Heart right ventricle (tissue), 16 donors: ENCODE measurements at regions of chr16 and their contacts with region 1.

Region 1: DNA sequence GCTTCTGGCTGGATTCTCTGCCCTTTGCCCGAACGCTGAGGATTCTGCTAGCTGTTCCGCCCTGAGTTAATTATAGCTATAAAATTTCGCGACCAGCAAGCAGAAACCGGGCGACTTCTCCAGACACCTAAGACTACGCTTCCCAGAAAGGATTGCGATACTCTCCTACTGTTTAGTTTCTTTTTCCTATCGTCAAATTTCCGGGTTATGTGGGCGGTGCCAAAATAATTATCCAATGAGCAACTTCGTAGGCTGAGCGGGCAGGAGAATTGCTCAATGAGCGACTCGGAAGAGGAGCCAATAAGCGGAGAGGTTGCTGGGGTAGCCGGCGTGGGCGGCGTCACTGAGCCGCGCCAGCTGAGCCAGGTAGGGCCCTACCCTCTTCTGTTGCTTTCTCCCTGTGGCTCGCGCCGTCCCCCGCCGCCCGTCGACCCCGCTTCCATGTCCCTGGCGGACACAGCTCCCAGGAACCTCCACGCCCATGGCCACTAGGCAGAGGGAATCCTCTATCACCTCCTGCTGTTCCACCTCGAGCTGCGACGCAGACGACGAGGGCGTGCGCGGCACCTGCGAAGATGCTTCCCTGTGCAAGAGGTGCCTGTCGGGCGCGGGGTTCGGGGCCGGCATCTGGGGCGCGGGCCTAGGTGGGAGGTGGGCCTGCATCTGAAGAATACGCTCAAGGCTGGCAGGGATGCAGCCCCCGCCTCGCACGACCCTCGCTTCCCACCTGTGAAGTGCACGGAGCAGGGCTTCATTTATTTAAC is at the start of gene LCMT1:
- DNase-seq: peak; percentile 85 to 96
- ATAC-seq: peak; percentile 86 to 93 (median 90)
- H3K4me3 ChIP-seq: peak within 1 kb of the TSS; percentile 64 to 100 (median 94)
- H3K27ac ChIP-seq: peak within 1 kb of the TSS; percentile 44 to 94 (median 85)
- H3K4me1 ChIP-seq: peaks cover 4 to 56% (median 41%) of the 10 kb centered on the region in 9 donors
- H3K27me3 ChIP-seq: no peaks in the 10 kb centered on the region
- CTCF ChIP-seq: peak in 1 of 9 donors; percentile 27
- total RNA-seq, gene LCMT1: 38.4 to 49.1 (median 44.2) TPM

Region 2: DNA sequence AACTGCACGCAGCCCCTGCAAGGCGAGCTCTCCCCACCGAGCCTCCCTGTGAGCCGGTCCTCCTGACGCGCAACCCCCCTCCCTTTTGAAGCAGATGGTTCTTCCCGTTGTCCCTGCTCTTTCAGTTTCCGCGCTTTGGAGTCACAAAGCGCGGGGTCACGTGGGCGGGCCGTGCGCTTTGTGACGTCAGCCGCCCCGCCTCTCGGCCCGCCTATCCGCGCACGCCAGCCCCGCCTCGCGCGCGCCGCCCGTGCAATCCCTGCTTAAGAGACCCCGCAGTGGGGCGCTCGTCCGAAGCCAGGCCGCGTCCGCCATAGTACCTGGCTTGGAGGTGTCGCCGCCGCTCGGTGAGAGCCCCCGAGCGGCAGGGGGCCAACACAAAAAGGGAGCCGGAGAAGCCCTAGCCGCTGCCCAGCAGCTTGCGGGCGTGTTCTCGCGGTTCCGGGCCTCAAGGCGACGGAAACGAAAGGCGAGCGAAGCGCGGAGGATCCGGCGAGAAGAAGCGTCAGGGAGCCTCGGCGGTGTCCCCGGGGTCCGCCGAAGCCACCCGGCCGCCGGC is 572.2 kb before region 1 on chr16 and contains the start of gene RBBP6:
- intact Hi-C with region 1: loop called in 1 of 10 experiments (anchors 5 kb)
- DNase-seq: peak; percentile 93 to 95
- ATAC-seq: peak; percentile 95 to 98 (median 97)
- H3K4me3 ChIP-seq: peak within 1 kb of the TSS; percentile 61 to 97 (median 82)
- H3K27ac ChIP-seq: peak within 1 kb of the TSS; percentile 95 to 100 (median 100)
- H3K4me1 ChIP-seq: peaks cover 3 to 35% (median 29%) of the 10 kb centered on the region in 9 donors
- H3K27me3 ChIP-seq: no peaks in the 10 kb centered on the region
- CTCF ChIP-seq: peak; percentile 7 to 57 (median 39)
- total RNA-seq, gene RBBP6: 26.8 to 50.3 (median 33.1) TPM

Region 3: DNA sequence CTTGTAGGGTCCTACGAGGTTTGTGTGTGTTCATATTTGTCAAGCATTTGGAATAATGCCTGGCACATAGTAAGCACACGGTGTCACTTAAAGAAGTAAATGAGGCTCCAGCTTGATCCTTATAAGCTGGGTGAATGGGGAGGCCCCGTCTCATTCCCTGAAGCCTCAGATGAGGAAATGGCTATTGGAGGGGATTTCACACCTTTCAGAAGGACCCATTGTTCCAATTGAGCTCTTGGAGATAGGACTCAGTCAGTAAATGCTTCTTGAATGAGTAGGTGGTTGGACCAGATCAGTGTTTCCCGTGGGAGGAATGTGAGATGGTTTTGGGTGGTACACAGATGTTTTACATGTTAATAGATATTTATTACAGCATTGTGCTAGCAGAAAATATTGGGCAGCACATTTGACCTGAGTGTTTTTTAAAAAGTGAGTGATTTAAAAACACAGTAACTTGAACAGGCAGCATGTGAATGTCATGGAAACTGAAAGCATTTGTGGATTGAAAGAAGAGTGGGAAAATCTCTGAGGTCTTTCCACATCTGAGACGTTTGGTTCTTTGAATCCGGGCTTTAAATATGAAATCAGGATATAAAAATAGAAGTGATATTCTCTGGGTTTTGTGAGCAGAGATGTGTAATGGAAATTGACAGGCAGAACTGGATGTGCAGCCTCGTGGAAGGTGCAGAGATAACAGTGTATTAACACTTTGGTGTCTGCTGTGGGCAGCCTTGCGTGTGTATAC is 60.0 kb before region 1 on chr16:
- intact Hi-C with region 1: loop called in 4 of 10 experiments (anchors 2 to 5 kb)
- DNase-seq: no peak
- ATAC-seq: peak in 6 of 8 donors; percentile 35 to 71 (median 60)
- H3K4me3 ChIP-seq: peak overlapping the region in 5 of 10 donors; percentile 5 to 24 (median 20)
- H3K27ac ChIP-seq: peak overlapping the region; percentile 36 to 97 (median 78)
- H3K4me1 ChIP-seq: peaks cover 0 to 54% (median 29%) of the 10 kb centered on the region in 9 donors
- H3K27me3 ChIP-seq: no peaks in the 10 kb centered on the region
- CTCF ChIP-seq: no peak

Region 4: DNA sequence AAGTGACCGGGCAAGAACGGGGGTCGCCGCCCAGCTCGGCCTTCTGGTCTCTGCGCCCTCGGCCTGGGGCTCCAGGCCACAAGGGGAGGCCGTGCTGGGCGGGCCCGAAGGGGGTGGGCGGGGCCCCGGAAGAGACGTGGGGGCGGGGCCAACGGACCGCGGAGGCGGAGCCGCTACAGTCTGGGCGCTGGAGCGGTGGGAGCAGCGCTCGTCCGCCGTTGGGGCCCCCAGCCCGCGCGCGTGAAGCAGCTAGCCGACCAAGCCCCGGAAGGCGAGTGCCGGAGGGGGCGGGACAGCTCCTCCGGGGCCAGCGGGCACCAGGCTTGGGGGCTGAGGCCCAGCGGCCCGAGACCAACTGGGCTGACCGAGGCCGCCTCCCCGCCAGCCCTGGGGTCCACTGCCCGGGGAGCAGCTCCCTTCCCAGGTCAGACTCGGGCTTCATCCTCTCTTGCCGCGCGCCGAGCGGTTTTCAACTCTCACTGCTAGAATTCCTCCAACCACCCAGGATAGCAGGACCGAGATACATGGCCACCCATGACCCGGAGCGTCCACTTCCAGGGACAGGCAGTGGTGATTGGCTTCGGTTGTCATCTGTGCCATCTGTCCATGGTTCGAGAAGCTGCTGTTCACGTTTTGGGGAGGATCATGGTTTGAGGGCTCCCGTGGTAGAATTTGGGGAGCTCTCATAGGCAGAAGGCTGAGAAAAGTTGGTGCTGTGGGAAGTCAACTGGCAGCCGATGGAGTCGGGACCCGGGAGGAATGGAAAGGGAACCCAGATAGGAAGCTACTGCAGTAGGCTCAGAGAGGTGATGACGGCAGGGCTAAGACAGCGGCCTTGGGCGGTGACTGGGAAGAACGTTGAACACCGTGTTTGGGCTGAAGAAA is 44.6 kb before region 1 on chr16:
- intact Hi-C with region 1: loop called in 6 of 10 experiments (anchors 2 to 5 kb)
- DNase-seq: peak; percentile 87 to 88
- ATAC-seq: peak; percentile 93 to 99 (median 97)
- H3K4me3 ChIP-seq: peak overlapping the region; percentile 69 to 94 (median 82)
- H3K27ac ChIP-seq: peak overlapping the region; percentile 74 to 97 (median 94)
- H3K4me1 ChIP-seq: peaks cover 0 to 36% (median 27%) of the 10 kb centered on the region in 9 donors
- H3K27me3 ChIP-seq: no peaks in the 10 kb centered on the region
- CTCF ChIP-seq: no peak

Region 5: DNA sequence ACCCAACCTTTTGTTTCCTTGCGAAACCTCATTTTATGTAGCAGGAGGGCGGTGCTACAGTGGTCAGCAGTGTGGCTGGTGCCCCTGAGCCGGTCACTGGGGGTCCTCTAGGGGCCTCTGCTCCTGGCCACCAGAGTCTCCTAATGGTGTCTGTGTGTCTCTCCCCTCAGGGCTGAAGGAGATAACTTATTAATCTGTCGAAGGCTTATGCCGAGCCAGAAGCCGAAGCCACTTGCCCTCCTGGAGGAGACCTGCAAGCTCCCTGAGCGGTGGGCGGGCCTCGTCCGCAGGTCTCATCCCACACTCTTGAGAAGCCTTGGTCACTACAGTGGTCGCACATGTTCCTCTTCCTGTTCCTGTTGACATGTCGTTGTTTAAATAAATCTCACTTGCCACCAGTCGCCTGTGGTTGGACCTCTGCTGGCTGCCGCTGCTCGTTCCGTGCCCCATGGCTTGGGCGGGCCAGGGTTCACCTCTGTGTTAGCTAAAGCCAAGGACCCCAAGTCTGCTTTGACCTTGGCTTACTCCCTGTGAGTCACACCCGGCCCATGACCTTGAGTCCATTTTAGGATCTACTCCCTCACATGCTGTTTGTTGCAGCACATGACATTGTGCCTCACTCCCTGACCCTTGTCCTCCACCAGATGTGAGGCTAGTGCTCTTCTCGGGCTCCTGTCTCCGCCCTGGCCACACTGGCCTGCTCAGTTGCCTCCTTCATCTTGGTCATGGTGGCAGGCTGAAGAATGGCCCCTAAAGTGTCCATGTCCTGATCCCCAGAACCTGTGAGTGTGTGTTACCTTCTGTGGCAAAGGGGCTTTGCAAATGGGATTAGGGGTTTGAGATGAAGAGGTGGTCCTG is 66.5 kb after region 1 on chr16:
- intact Hi-C with region 1: loop called in 1 of 10 experiments (anchors 10 kb)
- DNase-seq: no peak
- ATAC-seq: peak in 3 of 8 donors; percentile 30 to 37 (median 31)
- H3K4me3 ChIP-seq: no peak overlapping the region
- H3K27ac ChIP-seq: no peak overlapping the region
- H3K4me1 ChIP-seq: no peaks in the 10 kb centered on the region
- H3K27me3 ChIP-seq: no peaks in the 10 kb centered on the region
- CTCF ChIP-seq: no peak

Region 6: DNA sequence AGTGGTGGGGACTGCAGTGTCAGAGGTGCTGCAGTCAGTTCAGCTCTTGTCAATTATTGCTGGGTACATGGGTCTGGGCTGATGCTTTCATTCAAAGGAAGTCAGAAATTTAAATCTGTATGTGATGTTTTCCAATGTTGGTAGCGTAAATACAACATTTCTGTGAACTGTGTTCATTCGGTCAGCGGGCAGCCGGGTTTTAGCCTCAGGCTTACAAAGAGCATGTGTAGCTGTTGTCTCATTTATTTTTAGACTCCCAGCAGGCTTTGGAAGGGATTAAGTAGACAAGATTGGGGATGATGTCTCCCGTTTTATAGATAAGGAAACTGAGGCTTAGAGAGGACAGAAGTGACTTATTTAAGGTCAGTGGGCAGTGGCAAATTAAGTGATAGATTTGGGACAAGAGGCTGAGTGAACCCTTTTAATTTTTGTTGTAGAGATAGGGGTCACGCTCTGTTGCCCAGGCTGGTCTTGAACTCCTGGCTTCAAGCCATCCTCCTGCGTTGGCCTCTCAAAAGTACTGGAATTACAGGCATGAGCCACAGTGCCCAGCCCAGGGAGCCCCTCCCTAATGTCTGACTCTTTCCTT is 113.2 kb after region 1 on chr16:
- intact Hi-C with region 1: loop called in 1 of 10 experiments (anchors 10 kb)
- DNase-seq: no peak
- ATAC-seq: no peak
- H3K4me3 ChIP-seq: no peak overlapping the region
- H3K27ac ChIP-seq: no peak overlapping the region
- H3K4me1 ChIP-seq: peaks cover 0 to 3% (median 0%) of the 10 kb centered on the region in 9 donors
- H3K27me3 ChIP-seq: peaks cover 0 to 4% (median 0%) of the 10 kb centered on the region in 7 donors
- CTCF ChIP-seq: no peak